ENCODE measurements at regions of chr22 and their contacts with region 1.

Region 1: GRCh38 chr22:31526270-31526669 is 29.9 kb downstream of the SFI1 start:
- DNase-seq: peak; percentile 27
- H3K4me3 Mint-ChIP-seq: peak overlapping the region; percentile 69
- H3K27ac Mint-ChIP-seq: peak overlapping the region; percentile 93
- H3K4me1 Mint-ChIP-seq: peaks cover 73% of the 10 kb centered on the region
- H3K27me3 Mint-ChIP-seq: no peaks in the 10 kb centered on the region

Region 2: DNA sequence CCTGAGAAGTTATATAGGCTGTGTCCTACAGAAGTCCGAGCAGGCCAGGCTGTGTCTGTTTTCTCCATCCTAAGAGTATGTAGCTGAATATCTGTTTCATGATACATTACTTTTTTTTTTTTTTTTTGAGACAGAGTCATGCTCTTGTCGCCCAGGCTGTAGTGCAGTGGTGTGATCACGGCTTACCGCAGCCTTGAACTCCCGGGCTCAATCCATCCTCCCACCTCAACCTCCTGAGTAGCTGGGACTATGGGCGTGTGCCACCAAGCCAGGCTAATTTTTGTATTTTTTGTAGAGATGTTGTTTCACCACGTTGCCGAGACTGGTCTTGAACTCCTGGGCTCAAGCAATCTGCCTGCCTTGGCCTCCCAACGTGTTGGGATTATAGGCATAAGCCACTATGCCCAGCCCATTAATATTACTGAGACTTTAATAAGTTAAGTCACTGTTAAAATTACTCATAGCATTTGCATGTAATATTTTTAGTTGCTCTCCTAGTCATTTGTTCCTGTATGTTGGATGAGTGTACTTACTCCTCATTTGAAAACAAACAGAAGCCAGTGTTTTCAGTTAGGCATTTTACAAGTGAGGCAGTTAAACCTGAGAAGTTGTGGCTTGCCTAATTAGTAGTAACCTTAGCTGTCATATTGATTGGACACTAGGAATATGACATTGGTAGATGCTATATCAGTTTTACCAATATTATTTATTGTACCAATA is 100.8 kb before region 1 on chr22:
- intact Hi-C with region 1: no loop called
- DNase-seq: no peak
- H3K4me3 Mint-ChIP-seq: no peak overlapping the region
- H3K27ac Mint-ChIP-seq: no peak overlapping the region
- H3K4me1 Mint-ChIP-seq: no peaks in the 10 kb centered on the region
- H3K27me3 Mint-ChIP-seq: no peaks in the 10 kb centered on the region

Region 3: GRCh38 chr22:31496007-31496734 is 30.1 kb before region 1 on chr22 and contains the start of gene SFI1:
- intact Hi-C with region 1: loop called (anchors 1 kb)
- DNase-seq: peak; percentile 94
- H3K4me3 Mint-ChIP-seq: peak within 1 kb of the TSS; percentile 99
- H3K27ac Mint-ChIP-seq: peak within 1 kb of the TSS; percentile 99
- H3K4me1 Mint-ChIP-seq: peaks cover 40% of the 10 kb centered on the region
- H3K27me3 Mint-ChIP-seq: no peaks in the 10 kb centered on the region
- total RNA-seq, gene SFI1: 406 and 416 TPM in 2 replicates

Region 4: GRCh38 chr22:31509061-31509762 is 17.1 kb before region 1 on chr22:
- intact Hi-C with region 1: loop called (anchors 2 kb)
- DNase-seq: no peak
- H3K4me3 Mint-ChIP-seq: no peak overlapping the region
- H3K27ac Mint-ChIP-seq: peak overlapping the region; percentile 63
- H3K4me1 Mint-ChIP-seq: peaks cover 34% of the 10 kb centered on the region
- H3K27me3 Mint-ChIP-seq: no peaks in the 10 kb centered on the region

Region 5: DNA sequence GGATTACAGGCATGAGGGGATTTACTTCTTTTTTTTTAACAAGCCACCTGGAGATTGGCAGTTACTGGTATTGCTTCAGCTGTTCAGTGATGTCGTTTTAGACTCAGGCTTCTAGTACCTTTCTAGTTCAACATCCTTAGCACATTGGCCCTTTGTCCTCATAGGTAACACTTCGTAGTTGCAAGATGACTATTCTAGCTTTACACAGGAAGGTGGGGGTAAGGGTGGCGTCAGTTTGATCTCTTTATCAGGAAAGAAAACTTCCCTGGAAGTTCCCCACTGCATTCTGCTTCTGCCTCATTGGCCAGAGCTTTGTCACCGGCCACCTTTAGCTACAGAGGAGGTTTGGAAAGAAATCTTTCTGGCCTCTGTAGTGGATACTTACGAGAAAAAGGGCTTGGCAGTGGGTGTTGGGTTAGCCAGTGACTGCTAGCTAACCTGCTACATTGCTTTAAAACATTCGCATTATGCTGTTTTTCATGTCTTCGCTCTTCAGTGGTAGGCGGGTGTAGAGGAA is 10.8 kb after region 1 on chr22:
- intact Hi-C with region 1: loop called (anchors 1 kb)
- DNase-seq: peak; percentile 64
- H3K4me3 Mint-ChIP-seq: peak overlapping the region; percentile 80
- H3K27ac Mint-ChIP-seq: peak overlapping the region; percentile 97
- H3K4me1 Mint-ChIP-seq: peaks cover 69% of the 10 kb centered on the region
- H3K27me3 Mint-ChIP-seq: no peaks in the 10 kb centered on the region